OCI-LY7 (cell line): ENCODE measurements at regions of chr10 and their contacts with region 1.

Region 1: GRCh38 chr10:119821182-119821581 is 51.5 kb downstream of the MCMBP start:
- DNase-seq: no peak
- H3K4me3 ChIP-seq: no peak overlapping the region
- H3K27ac ChIP-seq: no peak overlapping the region
- H3K4me1 ChIP-seq: no peaks in the 10 kb centered on the region
- CTCF ChIP-seq: no peak

Region 2: GRCh38 chr10:119686439-119687191 is 134.6 kb before region 1 on chr10:
- CTCF ChIA-PET with region 1: no interaction called
- POLR2A ChIA-PET with region 1: no interaction called
- intact Hi-C with region 1: loop called (anchors 5 kb)
- DNase-seq: peak; percentile 80
- H3K4me3 ChIP-seq: no peak overlapping the region
- H3K27ac ChIP-seq: no peak overlapping the region
- H3K4me1 ChIP-seq: no peaks in the 10 kb centered on the region
- CTCF ChIP-seq: peak; percentile 95

Region 3: GRCh38 chr10:119919826-119920225 is 98.6 kb after region 1 on chr10:
- CTCF ChIA-PET with region 1: no interaction called
- POLR2A ChIA-PET with region 1: no interaction called
- intact Hi-C with region 1: no loop called
- DNase-seq: no peak
- H3K4me3 ChIP-seq: no peak overlapping the region
- H3K27ac ChIP-seq: no peak overlapping the region
- H3K4me1 ChIP-seq: peaks cover 5% of the 10 kb centered on the region
- CTCF ChIP-seq: no peak

Region 4: GRCh38 chr10:120011359-120012130 is 190.4 kb after region 1 on chr10:
- CTCF ChIA-PET with region 1: no interaction called
- POLR2A ChIA-PET with region 1: no interaction called
- intact Hi-C with region 1: no loop called
- DNase-seq: no peak
- H3K4me3 ChIP-seq: no peak overlapping the region
- H3K27ac ChIP-seq: no peak overlapping the region
- H3K4me1 ChIP-seq: no peaks in the 10 kb centered on the region
- CTCF ChIP-seq: no peak